Transverse colon (tissue), 4 donors: ENCODE measurements at regions of chr3 and their contacts with region 1.

Region 1: DNA sequence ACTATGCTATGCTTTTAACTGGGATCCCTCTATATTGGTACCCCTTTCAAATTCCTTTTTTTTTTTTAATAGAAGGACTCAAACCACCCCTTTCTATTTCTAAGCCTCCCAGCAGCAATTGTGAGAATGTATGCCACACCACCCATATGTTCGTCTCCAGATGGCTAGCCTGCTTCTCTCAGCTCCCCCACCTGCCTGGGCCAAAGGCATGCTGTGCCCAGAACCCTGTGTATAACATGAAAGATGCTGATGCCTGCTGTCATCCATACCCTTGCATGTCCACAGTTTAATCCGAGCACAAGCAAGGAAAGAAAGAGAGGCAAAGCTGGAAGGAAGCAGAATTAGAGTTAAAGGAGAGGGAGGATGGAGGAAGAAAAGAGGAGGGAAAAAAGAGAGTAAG is 159.5 kb upstream of the CNTN6 start:
- DNase-seq: no peak
- H3K4me3 ChIP-seq: no peak overlapping the region
- H3K27ac ChIP-seq: no peak overlapping the region
- H3K4me1 ChIP-seq: no peaks in the 10 kb centered on the region
- H3K27me3 ChIP-seq: no peaks in the 10 kb centered on the region
- CTCF ChIP-seq: no peak
- EP300 ChIP-seq: no peak
- POLR2A ChIP-seq: no peak

Region 2: DNA sequence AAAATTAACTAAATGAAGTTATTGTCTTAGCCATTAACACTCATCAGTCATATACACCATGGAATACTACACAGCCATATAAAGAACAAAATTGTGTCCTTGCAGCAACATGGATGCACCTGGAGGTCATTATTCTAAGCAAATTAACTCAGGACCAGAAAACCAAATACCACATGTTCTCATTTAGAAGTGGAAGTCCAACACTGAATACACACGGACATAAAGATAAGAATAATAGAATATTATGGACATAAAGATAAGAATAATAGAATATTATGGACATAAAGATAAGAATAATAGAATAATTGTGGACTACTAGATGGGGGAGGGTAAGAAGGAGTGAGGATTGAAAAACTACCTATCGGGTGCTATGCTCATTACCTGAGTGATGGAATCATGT is 614.4 kb before region 1 on chr3:
- in situ Hi-C with region 1: no loop called
- intact Hi-C with region 1: no loop called
- DNase-seq: no peak
- H3K4me3 ChIP-seq: no peak overlapping the region
- H3K27ac ChIP-seq: no peak overlapping the region
- H3K4me1 ChIP-seq: no peaks in the 10 kb centered on the region
- H3K27me3 ChIP-seq: no peaks in the 10 kb centered on the region
- CTCF ChIP-seq: no peak
- EP300 ChIP-seq: no peak
- POLR2A ChIP-seq: no peak

Region 3: DNA sequence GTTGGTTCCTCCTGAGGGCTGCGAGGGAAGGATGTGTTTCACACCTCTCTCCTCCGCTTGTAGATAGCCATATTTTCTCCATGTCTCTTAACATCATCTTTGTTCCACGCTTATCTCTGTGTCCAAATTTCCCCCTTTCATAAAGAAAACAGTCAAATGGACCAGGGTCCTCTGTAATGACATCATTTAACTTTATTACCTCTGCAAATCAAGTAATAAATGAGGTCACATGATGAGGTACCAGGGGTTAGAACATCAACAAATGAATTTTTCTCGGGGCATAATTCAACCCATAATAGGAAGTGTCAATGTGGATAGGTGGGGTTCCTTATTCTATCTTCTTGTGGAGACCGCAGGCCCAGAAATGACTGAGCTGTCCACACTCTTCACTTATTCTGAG is 885.4 kb after region 1 on chr3:
- in situ Hi-C with region 1: no loop called
- intact Hi-C with region 1: loop called (anchors 5 kb)
- DNase-seq: no peak
- H3K4me3 ChIP-seq: no peak overlapping the region
- H3K27ac ChIP-seq: no peak overlapping the region
- H3K4me1 ChIP-seq: no peaks in the 10 kb centered on the region
- H3K27me3 ChIP-seq: no peaks in the 10 kb centered on the region
- CTCF ChIP-seq: no peak
- EP300 ChIP-seq: no peak
- POLR2A ChIP-seq: no peak